ENCODE measurements at regions of chr10 and their contacts with region 1.

Region 1: DNA sequence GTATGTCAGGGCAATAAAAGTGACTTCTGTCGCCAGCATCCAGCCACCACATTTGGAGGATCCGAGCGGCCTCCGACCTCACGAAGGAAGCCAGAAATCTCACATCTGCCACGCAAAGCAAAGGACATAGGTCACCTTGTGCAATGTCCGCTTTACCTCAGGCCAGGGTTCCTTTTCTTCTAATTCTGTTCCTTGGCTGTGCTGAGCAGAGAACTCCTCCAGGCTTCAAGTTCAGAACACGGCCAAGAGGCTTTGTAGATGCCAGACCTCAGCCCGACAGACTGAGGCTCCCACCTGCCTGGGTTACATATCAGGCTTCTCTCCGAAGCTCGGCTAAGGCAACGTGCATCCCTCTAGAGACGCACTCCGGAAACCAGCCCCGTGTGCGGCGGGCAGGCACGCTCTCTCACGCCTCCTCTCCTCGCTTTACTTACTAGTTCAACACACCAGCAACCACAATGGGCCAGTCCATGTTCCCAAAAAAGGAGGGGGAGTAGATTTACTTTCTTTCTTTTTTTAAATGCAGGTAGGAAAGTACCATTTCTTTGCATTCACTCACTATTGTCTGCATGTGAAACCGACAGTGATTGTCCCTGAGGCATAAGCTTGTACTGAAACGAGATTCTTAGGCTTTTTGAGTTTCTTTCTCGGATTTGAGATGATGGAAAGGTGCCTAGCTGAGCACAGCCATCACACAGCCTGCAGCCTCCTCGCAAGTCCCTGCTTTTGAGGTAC is 122.4 kb upstream of the AFAP1L2 start:
- DNase-seq: peak; percentile 91
- H3K4me3 Mint-ChIP-seq: peak overlapping the region; percentile 86
- H3K27ac Mint-ChIP-seq: peak overlapping the region; percentile 92
- H3K4me1 Mint-ChIP-seq: peaks cover 52% of the 10 kb centered on the region
- H3K27me3 Mint-ChIP-seq: no peaks in the 10 kb centered on the region

Region 2: DNA sequence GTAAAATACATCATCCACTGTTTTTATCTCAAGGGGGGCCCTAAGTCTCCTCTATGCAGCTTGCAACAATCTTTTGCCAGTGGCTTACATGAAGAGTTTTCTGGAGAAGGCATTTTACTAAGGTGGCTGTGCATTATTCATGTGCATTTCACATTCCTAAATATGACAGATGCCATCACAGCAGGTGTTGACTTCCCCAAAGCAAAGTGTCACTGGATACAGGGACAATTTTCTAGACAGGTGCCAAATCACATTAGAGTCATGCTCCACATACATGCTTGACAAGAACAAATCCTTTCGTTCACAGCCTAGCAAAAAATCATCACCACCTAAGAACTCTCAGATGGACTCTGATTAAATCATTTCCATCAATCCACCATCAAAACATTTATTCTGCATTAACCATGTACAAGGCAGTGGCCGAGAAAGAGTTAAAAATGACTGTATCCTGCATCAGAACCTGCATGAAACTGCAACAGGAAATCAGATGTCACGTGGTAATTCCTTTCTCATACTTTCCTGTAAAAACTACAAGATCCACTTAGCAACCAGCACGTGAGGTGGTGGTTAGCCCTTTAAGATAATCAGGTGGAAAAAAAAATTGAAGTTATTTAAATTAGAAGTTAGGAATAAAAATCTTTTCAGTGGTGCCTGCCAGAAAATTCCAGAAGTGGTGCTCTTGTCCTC is 34.2 kb before region 1 on chr10:
- CTCF ChIA-PET with region 1: interaction called, 5 read pairs
- POLR2A ChIA-PET with region 1: interaction called, 11 read pairs
- DNase-seq: peak; percentile 43
- H3K4me3 Mint-ChIP-seq: no peak overlapping the region
- H3K27ac Mint-ChIP-seq: peak overlapping the region; percentile 57
- H3K4me1 Mint-ChIP-seq: peaks cover 65% of the 10 kb centered on the region
- H3K27me3 Mint-ChIP-seq: no peaks in the 10 kb centered on the region

Region 3: GRCh38 chr10:114499630-114500190 is 27.0 kb before region 1 on chr10:
- CTCF ChIA-PET with region 1: interaction called, 5 read pairs
- POLR2A ChIA-PET with region 1: interaction called, 42 read pairs
- DNase-seq: peak; percentile 66
- H3K4me3 Mint-ChIP-seq: peak overlapping the region; percentile 23
- H3K27ac Mint-ChIP-seq: peak overlapping the region; percentile 90
- H3K4me1 Mint-ChIP-seq: peaks cover 78% of the 10 kb centered on the region
- H3K27me3 Mint-ChIP-seq: no peaks in the 10 kb centered on the region

Region 4: DNA sequence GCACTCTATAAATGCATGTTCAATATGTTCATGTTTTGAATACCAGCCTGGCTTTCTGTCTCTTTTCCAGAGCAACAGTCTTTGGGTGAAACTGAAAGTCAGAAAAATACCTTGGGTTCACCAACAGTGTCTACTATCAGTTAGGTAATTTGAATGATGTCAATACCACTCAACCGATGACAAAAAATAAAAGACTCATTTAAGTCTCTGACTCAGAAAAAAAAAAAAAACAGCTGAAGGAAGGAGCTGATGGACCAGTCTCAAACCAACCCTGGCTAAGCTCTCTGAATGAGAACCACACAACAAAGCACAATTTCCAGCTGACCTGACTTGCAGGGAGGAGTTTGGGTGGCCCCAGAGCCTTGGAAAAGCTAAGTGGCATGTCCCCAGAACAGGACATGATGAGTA is 88.9 kb after region 1 on chr10:
- CTCF ChIA-PET with region 1: interaction called, 10 read pairs
- POLR2A ChIA-PET with region 1: no interaction called
- DNase-seq: peak; percentile 28
- H3K4me3 Mint-ChIP-seq: no peak overlapping the region
- H3K27ac Mint-ChIP-seq: peak overlapping the region; percentile 75
- H3K4me1 Mint-ChIP-seq: peaks cover 33% of the 10 kb centered on the region
- H3K27me3 Mint-ChIP-seq: no peaks in the 10 kb centered on the region

Region 5: DNA sequence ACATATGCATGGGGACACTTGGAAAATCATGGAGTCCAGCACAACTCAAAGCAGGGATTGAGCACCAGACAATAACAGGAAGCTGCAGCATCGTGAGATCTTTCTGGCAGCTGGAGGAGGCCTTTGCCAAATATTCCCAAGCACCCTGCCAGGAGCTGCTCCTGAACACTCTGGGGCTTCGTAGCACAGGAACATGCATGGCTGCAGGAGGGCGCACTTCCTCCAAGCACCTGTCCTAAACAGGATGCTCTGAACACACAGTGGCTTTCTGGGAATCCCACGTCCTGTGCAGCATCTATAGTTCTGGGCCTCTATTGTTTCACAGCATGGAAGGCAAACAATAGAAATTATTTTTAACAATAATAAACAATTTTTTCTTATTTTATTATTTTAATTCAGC is 127.3 kb after region 1 on chr10:
- CTCF ChIA-PET with region 1: no interaction called
- POLR2A ChIA-PET with region 1: no interaction called
- DNase-seq: no peak
- H3K4me3 Mint-ChIP-seq: no peak overlapping the region
- H3K27ac Mint-ChIP-seq: no peak overlapping the region
- H3K4me1 Mint-ChIP-seq: peaks cover 17% of the 10 kb centered on the region
- H3K27me3 Mint-ChIP-seq: peaks cover 5% of the 10 kb centered on the region